ENCODE measurements at regions of chr17 and their contacts with region 1.

Region 1: DNA sequence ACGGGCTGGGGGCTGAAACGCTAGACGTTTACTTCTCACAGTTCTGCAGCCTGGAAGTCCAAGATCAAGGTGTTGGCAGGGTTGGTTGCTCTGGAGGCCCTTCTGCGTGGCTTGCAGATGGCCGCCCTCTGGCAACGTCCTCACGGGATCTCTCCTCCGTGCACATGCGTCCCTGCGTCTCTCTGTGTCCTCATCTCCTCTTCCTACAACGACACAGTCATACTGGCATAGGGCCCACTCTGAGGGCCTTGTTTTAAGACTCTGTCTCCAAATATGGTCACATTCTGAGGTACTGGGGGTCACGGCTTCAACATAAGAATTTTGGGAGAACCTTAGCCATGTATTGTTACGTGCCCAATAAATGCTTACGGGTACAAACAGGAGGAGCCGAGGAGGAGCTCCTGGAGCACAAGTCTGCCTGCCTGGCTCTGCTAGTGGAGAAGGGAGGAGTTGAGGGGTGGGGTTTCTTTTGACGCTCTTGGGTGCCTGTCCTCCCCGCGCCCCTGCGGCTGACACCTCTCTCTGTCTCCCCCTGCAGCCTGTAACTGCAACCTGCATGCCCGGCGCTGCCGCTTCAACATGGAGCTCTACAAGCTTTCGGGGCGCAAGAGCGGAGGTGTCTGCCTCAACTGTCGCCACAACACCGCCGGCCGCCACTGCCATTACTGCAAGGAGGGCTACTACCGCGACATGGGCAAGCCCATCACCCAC is 141.1 kb downstream of the NTN1 start:
- DNase-seq: peak; percentile 51 to 84
- H3K4me3 ChIP-seq: peak overlapping the region; percentile 1 to 19 (median 16); a peak in 4 of 8 replicates
- H3K27ac ChIP-seq: 0 out of 2 replicates have a peak overlapping the region, but pooled peaks have one; percentile 33
- H3K4me1 ChIP-seq: peaks cover 0 to 17% (median 7%) of the 10 kb centered on the region in 4 experiments; a peak in 5 of 7 replicates
- H3K27me3 ChIP-seq: no peaks in the 10 kb centered on the region; a peak in 1 of 7 replicates
- CTCF ChIP-seq: peak; percentile 67 to 80 (median 75)
- EP300 ChIP-seq: no peak
- POLR2A ChIP-seq: no peak
- RAD21 ChIP-seq: peak; percentile 55 to 71

Region 2: GRCh38 chr17:9104370-9105041 is 57.9 kb before region 1 on chr17:
- CTCF ChIA-PET with region 1: no interaction called
- POLR2A ChIA-PET with region 1: no interaction called
- DNase-seq: no peak
- H3K4me3 ChIP-seq: no peak overlapping the region
- H3K27ac ChIP-seq: no peak overlapping the region
- H3K4me1 ChIP-seq: peaks cover 0 to 5% (median 0%) of the 10 kb centered on the region in 4 experiments; a peak in 3 of 7 replicates
- H3K27me3 ChIP-seq: no peaks in the 10 kb centered on the region
- CTCF ChIP-seq: no peak
- EP300 ChIP-seq: no peak
- POLR2A ChIP-seq: no peak
- RAD21 ChIP-seq: no peak

Region 3: DNA sequence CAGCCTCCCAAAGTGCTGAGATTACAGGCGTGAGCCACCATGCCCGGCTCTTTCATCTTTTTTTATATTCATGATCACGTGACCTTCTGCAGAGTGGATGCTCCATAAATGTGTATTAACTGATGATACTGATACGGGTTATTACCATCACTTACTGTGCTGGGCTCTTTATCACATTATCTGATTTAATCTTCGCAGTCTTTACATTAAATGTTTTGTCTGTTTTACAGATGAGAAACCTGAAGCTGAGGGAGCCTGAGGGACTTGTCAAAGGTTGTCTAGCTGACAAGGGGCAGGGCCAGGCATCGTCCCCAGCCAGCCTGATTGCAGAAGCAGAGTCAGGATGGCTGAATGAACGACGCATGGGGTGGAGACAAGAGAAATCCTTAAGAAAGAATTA is 36.7 kb before region 1 on chr17:
- CTCF ChIA-PET with region 1: interaction called, 12 read pairs
- POLR2A ChIA-PET with region 1: interaction called, 3 read pairs
- DNase-seq: no peak
- H3K4me3 ChIP-seq: no peak overlapping the region
- H3K27ac ChIP-seq: no peak overlapping the region
- H3K4me1 ChIP-seq: peaks cover 0 to 6% (median 1%) of the 10 kb centered on the region in 4 experiments; a peak in 2 of 7 replicates
- H3K27me3 ChIP-seq: no peaks in the 10 kb centered on the region
- CTCF ChIP-seq: no peak
- EP300 ChIP-seq: no peak
- POLR2A ChIP-seq: no peak
- RAD21 ChIP-seq: no peak

Region 4: GRCh38 chr17:9177212-9177611 is 14.8 kb after region 1 on chr17:
- CTCF ChIA-PET with region 1: interaction called, 17 read pairs
- POLR2A ChIA-PET with region 1: interaction called, 3 read pairs
- DNase-seq: no peak
- H3K4me3 ChIP-seq: no peak overlapping the region
- H3K27ac ChIP-seq: no peak overlapping the region
- H3K4me1 ChIP-seq: peaks cover 0 to 4% (median 0%) of the 10 kb centered on the region in 4 experiments; a peak in 1 of 7 replicates
- H3K27me3 ChIP-seq: no peaks in the 10 kb centered on the region
- CTCF ChIP-seq: no peak
- EP300 ChIP-seq: no peak
- POLR2A ChIP-seq: no peak
- RAD21 ChIP-seq: no peak

Measured in H1 (cell line).